Prostate gland (tissue), 2 donors: ENCODE measurements at regions of chr1 and their contacts with region 1.

Region 1: GRCh38 chr1:183023601-183024316 is 539 bp downstream of the LAMC1 start:
- DNase-seq: peak; percentile 86
- H3K4me3 ChIP-seq: peak overlapping the region; percentile 84
- H3K27ac ChIP-seq: peak overlapping the region; percentile 98 to 100
- H3K4me1 ChIP-seq: no peaks in the 10 kb centered on the region
- H3K27me3 ChIP-seq: no peaks in the 10 kb centered on the region
- CTCF ChIP-seq: peak in 3 of 4 experiments; percentile 57 to 71 (median 67)
- POLR2A ChIP-seq: peak; percentile 68

Region 2: DNA sequence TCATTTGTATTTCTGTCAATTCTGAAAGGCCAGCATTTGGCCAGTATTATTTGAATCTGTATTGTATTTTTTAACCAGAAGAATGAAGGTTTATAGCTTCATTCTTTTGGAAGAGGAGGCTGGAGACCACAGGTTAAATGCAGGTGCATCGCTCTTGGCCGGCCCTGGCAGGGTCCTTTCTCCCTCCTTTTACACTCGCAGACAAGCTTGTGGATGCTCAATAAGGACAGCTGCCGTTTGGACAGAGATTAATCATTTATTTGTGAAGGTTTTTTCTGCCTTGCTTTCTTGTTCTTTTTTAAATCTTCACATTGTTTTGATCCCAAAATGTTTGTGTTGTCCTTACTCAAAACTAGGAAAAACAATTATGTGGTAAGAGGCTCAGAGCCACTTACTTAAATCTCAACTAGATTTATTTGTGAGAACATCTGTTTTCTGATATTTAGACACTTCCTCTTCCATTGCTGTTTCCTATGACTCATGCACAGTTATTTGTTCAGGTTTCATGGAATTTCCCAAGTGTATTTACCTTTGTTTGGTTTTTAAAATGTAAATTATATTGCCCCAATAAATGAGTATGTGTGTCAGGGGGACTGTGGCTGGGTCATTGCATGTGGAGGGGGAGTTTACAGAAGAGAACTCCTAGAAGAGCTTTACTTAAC is 115.7 kb after region 1 on chr1:
- intact Hi-C with region 1: loop called (anchors 5 kb)
- DNase-seq: no peak
- H3K4me3 ChIP-seq: no peak overlapping the region
- H3K27ac ChIP-seq: no peak overlapping the region
- H3K4me1 ChIP-seq: no peaks in the 10 kb centered on the region
- H3K27me3 ChIP-seq: no peaks in the 10 kb centered on the region
- CTCF ChIP-seq: no peak
- POLR2A ChIP-seq: no peak

Region 3: GRCh38 chr1:183159960-183160359 is 136.2 kb after region 1 on chr1:
- intact Hi-C with region 1: no loop called
- DNase-seq: peak; percentile 93
- H3K4me3 ChIP-seq: no peak overlapping the region
- H3K27ac ChIP-seq: peak overlapping the region in 1 of 2 donors; percentile 36
- H3K4me1 ChIP-seq: no peaks in the 10 kb centered on the region
- H3K27me3 ChIP-seq: no peaks in the 10 kb centered on the region
- CTCF ChIP-seq: peak in 1 of 4 experiments; percentile 10
- POLR2A ChIP-seq: no peak

Region 4: GRCh38 chr1:183185941-183186490 is 162.3 kb after region 1 on chr1 and contains the start of gene LAMC2:
- intact Hi-C with region 1: loop called (anchors 5 kb)
- DNase-seq: peak; percentile 75
- H3K4me3 ChIP-seq: peak within 1 kb of the TSS; percentile 8 to 33
- H3K27ac ChIP-seq: peak within 1 kb of the TSS; percentile 66 to 71
- H3K4me1 ChIP-seq: no peaks in the 10 kb centered on the region
- H3K27me3 ChIP-seq: no peaks in the 10 kb centered on the region
- CTCF ChIP-seq: peak in 3 of 4 experiments; percentile 41 to 61 (median 57)
- POLR2A ChIP-seq: peak; percentile 69
- total RNA-seq, gene LAMC2: 9.3 to 11.6 TPM

Region 5: DNA sequence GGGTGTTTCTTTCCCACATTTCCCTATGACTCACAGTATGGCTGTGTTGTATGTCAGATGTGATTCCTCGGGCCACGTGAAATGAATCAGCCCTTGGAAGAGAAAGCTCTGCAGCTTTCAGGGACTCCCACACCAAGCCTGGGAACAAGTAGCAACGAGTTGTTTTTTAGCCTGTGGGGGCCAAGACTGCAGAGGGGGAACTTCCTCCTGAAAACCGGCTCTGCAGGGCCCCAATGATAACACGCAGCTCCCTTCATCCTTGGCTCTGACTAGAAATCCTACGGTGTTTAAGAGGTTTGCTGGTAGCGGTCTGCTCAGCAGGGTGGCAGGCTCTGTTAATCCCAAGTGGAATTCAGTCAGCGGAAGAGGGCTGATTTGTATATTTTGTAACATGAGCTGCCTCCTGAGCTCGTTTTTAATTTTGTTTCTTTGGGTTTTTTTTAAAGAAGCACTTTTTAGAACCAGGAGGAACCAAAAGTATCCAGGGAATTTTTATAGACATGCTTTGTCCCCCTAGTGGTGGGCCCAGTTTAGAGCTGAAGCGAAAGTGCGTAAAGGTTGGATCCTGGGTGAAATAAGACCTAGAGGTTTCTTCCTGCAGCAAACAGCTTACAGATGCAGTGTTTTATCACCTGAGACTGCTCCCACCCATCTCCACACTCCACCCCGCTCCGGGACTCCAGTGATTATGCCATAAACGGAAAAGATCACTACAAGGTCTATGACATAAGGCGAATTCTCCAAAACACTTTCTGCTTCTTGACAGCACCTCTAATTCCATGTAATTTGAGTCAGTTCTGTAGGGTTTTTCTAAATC is 211.1 kb after region 1 on chr1:
- intact Hi-C with region 1: loop called (anchors 10 kb)
- DNase-seq: peak; percentile 83
- H3K4me3 ChIP-seq: peak overlapping the region; percentile 14 to 24
- H3K27ac ChIP-seq: peak overlapping the region; percentile 68 to 80
- H3K4me1 ChIP-seq: peaks cover 3% of the 10 kb centered on the region
- H3K27me3 ChIP-seq: no peaks in the 10 kb centered on the region
- CTCF ChIP-seq: peak in 3 of 4 experiments; percentile 65 to 72 (median 67)
- POLR2A ChIP-seq: peak; percentile 12

Region 6: DNA sequence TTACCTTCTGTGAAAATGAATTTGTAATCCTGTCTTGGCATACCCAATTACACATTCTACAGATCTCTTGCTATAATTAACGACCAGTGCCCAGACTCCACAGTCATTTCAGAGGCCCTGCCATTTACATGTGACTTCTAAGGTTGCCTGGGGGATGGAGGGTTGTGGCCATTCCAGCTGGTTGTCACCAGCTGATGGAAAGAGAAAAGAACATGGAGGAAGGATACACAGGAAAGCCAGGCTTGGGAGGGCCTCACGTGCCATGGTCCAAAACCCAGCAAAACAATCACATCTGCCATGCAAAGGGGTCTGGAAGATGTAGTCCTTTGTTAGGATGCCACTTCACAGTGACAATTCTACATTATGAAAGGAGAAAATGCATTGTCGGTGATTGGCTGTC is 221.6 kb after region 1 on chr1:
- intact Hi-C with region 1: no loop called
- DNase-seq: no peak
- H3K4me3 ChIP-seq: no peak overlapping the region
- H3K27ac ChIP-seq: no peak overlapping the region
- H3K4me1 ChIP-seq: no peaks in the 10 kb centered on the region
- H3K27me3 ChIP-seq: no peaks in the 10 kb centered on the region
- CTCF ChIP-seq: no peak
- POLR2A ChIP-seq: no peak